IMR-90 (cell line): ENCODE measurements at regions of chr6 and their contacts with region 1.

Region 1: DNA sequence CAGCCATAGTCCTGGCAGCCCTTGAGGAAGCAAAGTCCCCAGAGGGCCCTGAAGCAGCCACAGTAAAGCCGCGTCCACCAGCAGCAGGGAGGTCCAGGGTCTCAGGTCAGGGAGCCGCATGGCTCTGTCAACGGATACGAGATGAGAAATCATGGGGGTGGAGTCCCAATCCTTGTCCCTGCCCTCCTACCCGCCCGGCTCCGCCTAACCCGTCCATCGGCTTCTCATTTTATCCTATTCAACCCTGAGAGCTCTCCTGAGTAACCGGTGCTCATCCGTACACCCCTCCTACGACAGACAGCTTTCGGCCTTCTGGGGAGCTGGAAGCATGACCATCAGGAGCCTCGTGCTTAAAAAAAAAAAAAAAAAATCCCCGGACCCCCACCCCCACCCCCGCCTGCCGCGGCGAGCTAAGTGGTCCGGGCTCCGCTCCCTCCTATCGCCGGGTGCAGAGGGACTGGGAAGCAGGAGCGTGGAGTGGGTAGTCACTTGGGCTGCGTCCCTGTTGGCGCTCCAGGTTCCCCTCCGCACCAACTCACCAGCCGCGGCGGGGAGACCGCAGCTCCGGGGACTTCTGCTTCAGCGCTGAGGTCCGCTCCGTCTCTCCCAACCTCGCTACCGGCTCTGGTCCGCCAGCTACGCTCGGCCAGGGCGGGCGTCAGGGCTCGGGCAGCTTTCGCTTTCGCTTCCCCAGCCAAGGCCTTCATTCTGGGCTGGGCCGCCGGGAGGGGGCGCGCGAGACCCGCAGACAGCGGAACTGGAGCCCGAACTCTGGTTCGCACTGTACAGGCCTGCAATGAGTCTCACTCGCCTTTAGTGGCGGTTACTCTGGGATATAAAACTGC is at the start of gene TAP2:
- DNase-seq: peak; percentile 89
- ATAC-seq: peak; percentile 96
- H3K4me3 ChIP-seq: peak within 1 kb of the TSS; percentile 89
- H3K27ac ChIP-seq: peak within 1 kb of the TSS; percentile 89
- H3K4me1 ChIP-seq: peaks cover 7% of the 10 kb centered on the region
- H3K27me3 ChIP-seq: no peaks in the 10 kb centered on the region
- CTCF ChIP-seq: peak; percentile 98
- POLR2A ChIP-seq: peak; percentile 58; the same call in 1 of the 2 replicates
- RAD21 ChIP-seq: peak; percentile 91
- total RNA-seq, gene TAP2: 6.6 and 8.1 TPM in 2 replicates

Region 2: DNA sequence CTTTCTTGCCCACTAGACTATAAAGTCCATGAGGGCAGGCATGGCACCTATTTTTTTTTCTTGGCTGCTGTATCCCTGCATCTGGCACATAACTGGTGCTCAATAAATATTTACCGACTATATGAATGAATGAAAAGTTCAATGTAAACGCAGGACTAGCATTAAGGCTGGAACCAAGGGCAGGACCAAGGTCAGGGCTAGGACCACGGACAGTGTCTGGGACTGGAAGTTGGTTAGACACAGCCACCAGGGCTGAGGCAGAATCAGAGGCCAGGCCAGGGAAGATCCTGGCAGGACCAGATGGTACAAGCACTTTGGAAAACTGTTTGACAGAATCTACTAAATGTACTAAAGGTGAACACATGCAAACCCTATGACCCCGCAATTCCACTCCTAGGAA is 732.9 kb before region 1 on chr6:
- CTCF ChIA-PET with region 1: no interaction called
- POLR2A ChIA-PET with region 1: no interaction called
- dilution Hi-C with region 1: no loop called
- in situ Hi-C with region 1: no loop called
- intact Hi-C with region 1: no loop called
- DNase-seq: peak; percentile 36
- ATAC-seq: peak; percentile 71
- H3K4me3 ChIP-seq: no peak overlapping the region
- H3K27ac ChIP-seq: no peak overlapping the region
- H3K4me1 ChIP-seq: peaks cover 21% of the 10 kb centered on the region
- H3K27me3 ChIP-seq: peaks cover 32% of the 10 kb centered on the region
- CTCF ChIP-seq: no peak
- POLR2A ChIP-seq: no peak
- RAD21 ChIP-seq: no peak

Region 3: DNA sequence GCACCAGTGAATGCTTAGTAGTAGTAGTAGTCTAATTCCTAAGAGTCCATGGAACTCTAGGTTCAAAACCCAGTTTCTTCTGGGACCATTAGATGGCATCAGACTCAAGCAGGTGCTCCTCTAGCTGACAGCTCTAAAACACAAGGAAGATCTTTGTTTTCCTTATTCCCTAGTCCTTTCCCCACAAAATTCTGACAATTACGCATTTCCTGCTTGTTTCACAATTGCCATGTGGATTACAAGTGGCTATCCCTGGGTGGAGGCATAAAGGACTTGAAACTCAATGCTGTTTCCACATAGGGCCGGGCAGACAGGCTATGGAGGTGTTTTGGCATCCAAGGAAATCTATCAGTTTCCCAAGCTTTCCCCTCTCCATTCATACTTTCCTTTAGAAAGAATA is 12.4 kb before region 1 on chr6:
- CTCF ChIA-PET with region 1: interaction called, 12 read pairs
- POLR2A ChIA-PET with region 1: no interaction called
- dilution Hi-C with region 1: no loop called
- in situ Hi-C with region 1: no loop called
- intact Hi-C with region 1: no loop called
- DNase-seq: peak; percentile 55
- ATAC-seq: peak; percentile 57
- H3K4me3 ChIP-seq: no peak overlapping the region
- H3K27ac ChIP-seq: no peak overlapping the region
- H3K4me1 ChIP-seq: peaks cover 2% of the 10 kb centered on the region; the same call in 1 of the 2 replicates
- H3K27me3 ChIP-seq: no peaks in the 10 kb centered on the region
- CTCF ChIP-seq: peak; percentile 36
- POLR2A ChIP-seq: no peak
- RAD21 ChIP-seq: peak; percentile 47

Region 4: GRCh38 chr6:32853541-32854375 is 15.4 kb after region 1 on chr6 and contains the starts of genes PSMB9 and TAP1:
- CTCF ChIA-PET with region 1: interaction called, 44 read pairs
- POLR2A ChIA-PET with region 1: interaction called, 9 read pairs
- dilution Hi-C with region 1: no loop called
- in situ Hi-C with region 1: no loop called
- intact Hi-C with region 1: loop called (anchors 1 kb)
- DNase-seq: peak; percentile 90
- ATAC-seq: peak; percentile 93
- H3K4me3 ChIP-seq: peak within 1 kb of the TSS; percentile 57
- H3K27ac ChIP-seq: peak within 1 kb of the TSS; percentile 75
- H3K4me1 ChIP-seq: peaks cover 4% of the 10 kb centered on the region
- H3K27me3 ChIP-seq: no peaks in the 10 kb centered on the region
- CTCF ChIP-seq: peak; percentile 85
- POLR2A ChIP-seq: peak; percentile 41; the same call in 1 of the 2 replicates
- RAD21 ChIP-seq: peak; percentile 57
- total RNA-seq, gene PSMB9: 8.3 and 9.0 TPM in 2 replicates
- total RNA-seq, gene TAP1: 20.8 and 27.6 TPM in 2 replicates

Region 5: DNA sequence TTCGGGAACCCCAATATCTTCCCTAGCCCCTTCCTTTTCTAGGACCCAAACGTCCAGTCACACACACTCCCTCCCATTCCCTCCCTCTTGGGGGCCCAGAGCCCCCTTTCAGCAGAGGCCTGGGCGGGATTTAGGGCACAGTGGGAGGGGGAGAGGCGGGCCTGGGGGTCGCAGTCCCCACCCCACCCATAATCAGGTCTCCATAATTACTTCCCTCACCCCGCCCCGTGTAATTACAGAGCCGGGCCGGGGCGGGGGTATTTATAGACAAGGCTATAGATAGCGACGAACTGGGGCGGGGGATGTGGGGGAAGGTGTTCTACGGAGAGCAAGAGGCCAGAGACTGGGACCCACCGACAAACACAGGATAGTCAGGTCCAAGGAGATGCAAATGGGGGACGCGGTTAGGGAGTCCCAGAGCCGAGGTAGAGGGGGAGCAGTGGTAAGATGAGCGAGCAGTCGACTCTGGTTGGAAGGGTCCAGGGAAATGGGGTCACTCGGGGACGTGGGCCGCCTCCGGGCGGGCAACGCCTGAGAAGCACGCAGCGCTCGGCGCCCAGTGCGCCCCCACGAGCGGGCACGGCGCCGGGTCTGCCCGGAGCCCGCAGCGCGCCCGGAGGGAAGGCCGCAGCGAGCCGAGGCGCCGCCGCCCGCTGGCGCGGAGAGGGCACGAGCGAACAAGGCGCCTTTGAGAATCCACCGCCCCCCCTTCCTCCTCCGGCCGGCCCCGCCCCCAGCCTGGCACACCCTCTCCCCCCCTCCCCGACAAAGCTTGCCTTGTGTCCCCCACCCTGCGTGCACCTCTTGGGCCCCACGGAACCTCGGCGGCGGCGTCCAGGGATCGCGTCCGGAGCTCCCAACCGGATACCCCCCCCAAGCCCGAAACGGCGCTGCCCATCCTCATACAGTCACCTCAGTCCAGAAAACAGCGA is 354.6 kb after region 1 on chr6:
- CTCF ChIA-PET with region 1: no interaction called
- POLR2A ChIA-PET with region 1: no interaction called
- dilution Hi-C with region 1: no loop called
- in situ Hi-C with region 1: no loop called
- intact Hi-C with region 1: no loop called
- DNase-seq: no peak
- ATAC-seq: peak; percentile 33
- H3K4me3 ChIP-seq: peak overlapping the region; percentile 43
- H3K27ac ChIP-seq: no peak overlapping the region; the same call in 1 of the 2 replicates
- H3K4me1 ChIP-seq: peaks cover 4% of the 10 kb centered on the region; the same call in 1 of the 2 replicates
- H3K27me3 ChIP-seq: peaks cover 41% of the 10 kb centered on the region
- CTCF ChIP-seq: no peak
- POLR2A ChIP-seq: no peak
- RAD21 ChIP-seq: no peak